Naive thymus-derived CD4-positive, alpha-beta T cell (primary cell): ENCODE measurements at regions of chr15 and their contacts with region 1.

Region 1: DNA sequence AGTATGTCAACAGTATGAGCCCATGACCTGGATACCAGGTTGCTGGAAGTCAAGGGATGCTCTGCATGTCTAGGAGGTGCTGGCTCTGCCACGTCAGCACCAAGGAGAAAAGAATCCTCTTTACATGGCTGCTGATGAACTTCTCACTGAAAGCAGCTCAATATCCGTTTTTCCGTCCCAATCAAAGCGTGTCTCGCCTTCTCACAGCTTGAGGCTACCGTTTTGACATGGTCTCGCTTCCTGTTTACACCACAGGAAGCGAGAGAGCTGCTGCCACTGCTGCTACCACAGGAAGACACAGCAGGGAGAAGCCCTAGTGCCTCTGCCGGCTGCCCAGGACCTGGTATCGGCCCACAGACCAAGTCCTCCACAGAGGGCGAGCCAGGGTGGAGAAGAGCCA is 27.3 kb downstream of the STARD5 start:
- DNase-seq: peak; percentile 38 to 87 (median 81)
- ATAC-seq: peak; percentile 69
- H3K4me3 ChIP-seq: peak overlapping the region; percentile 74
- H3K4me3 Mint-ChIP-seq: peak overlapping the region; percentile 80 to 100 (median 98)
- H3K27ac ChIP-seq: peak overlapping the region; percentile 87
- H3K27ac Mint-ChIP-seq: peak overlapping the region; percentile 93 to 100 (median 96)
- H3K4me1 ChIP-seq: peaks cover 52 to 59% of the 10 kb centered on the region in 2 donors
- H3K4me1 Mint-ChIP-seq: peaks cover 34 to 66% (median 64%) of the 10 kb centered on the region in 7 donors
- H3K27me3 ChIP-seq: no peaks in the 10 kb centered on the region
- H3K27me3 Mint-ChIP-seq: no peaks in the 10 kb centered on the region

Region 2: GRCh38 chr15:79970624-79971434 is 1325.8 kb before region 1 on chr15 and contains the start of gene BCL2A1:
- CTCF ChIA-PET with region 1: no interaction called
- POLR2A ChIA-PET with region 1: no interaction called
- intact Hi-C with region 1: loop called in 1 of 2 experiments (anchors 5 kb)
- DNase-seq: peak; percentile 30 to 85 (median 80)
- ATAC-seq: peak; percentile 91
- H3K4me3 ChIP-seq: peak within 1 kb of the TSS; percentile 81
- H3K4me3 Mint-ChIP-seq: peak within 1 kb of the TSS; percentile 88 to 98 (median 94)
- H3K27ac ChIP-seq: peak within 1 kb of the TSS; percentile 75
- H3K27ac Mint-ChIP-seq: peak within 1 kb of the TSS; percentile 93 to 99 (median 95)
- H3K4me1 ChIP-seq: peaks cover 27 to 39% of the 10 kb centered on the region in 2 donors
- H3K4me1 Mint-ChIP-seq: peaks cover 41 to 66% (median 58%) of the 10 kb centered on the region in 7 donors
- H3K27me3 ChIP-seq: no peaks in the 10 kb centered on the region
- H3K27me3 Mint-ChIP-seq: no peaks in the 10 kb centered on the region
- total RNA-seq, gene BCL2A1: 27.3 to 119 (median 31.0) TPM

Region 3: GRCh38 chr15:81073801-81074200 is 222.9 kb before region 1 on chr15:
- CTCF ChIA-PET with region 1: no interaction called
- POLR2A ChIA-PET with region 1: no interaction called
- intact Hi-C with region 1: no loop called
- DNase-seq: no peak
- ATAC-seq: no peak
- H3K4me3 ChIP-seq: no peak overlapping the region
- H3K4me3 Mint-ChIP-seq: no peak overlapping the region
- H3K27ac ChIP-seq: no peak overlapping the region
- H3K27ac Mint-ChIP-seq: no peak overlapping the region
- H3K4me1 ChIP-seq: no peaks in the 10 kb centered on the region
- H3K4me1 Mint-ChIP-seq: peaks cover 0 to 16% (median 0%) of the 10 kb centered on the region in 7 donors
- H3K27me3 ChIP-seq: no peaks in the 10 kb centered on the region
- H3K27me3 Mint-ChIP-seq: peaks cover 6 to 18% (median 10%) of the 10 kb centered on the region in 5 donors

Region 4: GRCh38 chr15:81286621-81287121 is 10.0 kb before region 1 on chr15:
- CTCF ChIA-PET with region 1: interaction called, 21 read pairs
- POLR2A ChIA-PET with region 1: interaction called, 642 read pairs
- intact Hi-C with region 1: loop called (anchors 1 kb)
- DNase-seq: peak in 7 of 9 donors; percentile 54 to 73 (median 68)
- ATAC-seq: peak; percentile 95
- H3K4me3 ChIP-seq: peak overlapping the region; percentile 49
- H3K4me3 Mint-ChIP-seq: peak overlapping the region; percentile 70 to 86 (median 80)
- H3K27ac ChIP-seq: peak overlapping the region; percentile 72
- H3K27ac Mint-ChIP-seq: peak overlapping the region; percentile 81 to 99 (median 96)
- H3K4me1 ChIP-seq: peaks cover 57 to 80% of the 10 kb centered on the region in 2 donors
- H3K4me1 Mint-ChIP-seq: peaks cover 52 to 98% (median 88%) of the 10 kb centered on the region in 7 donors
- H3K27me3 ChIP-seq: no peaks in the 10 kb centered on the region
- H3K27me3 Mint-ChIP-seq: no peaks in the 10 kb centered on the region

Region 5: GRCh38 chr15:81312790-81313543 is 16.3 kb after region 1 on chr15:
- CTCF ChIA-PET with region 1: interaction called, 28 read pairs
- POLR2A ChIA-PET with region 1: interaction called, 516 read pairs
- intact Hi-C with region 1: loop called in 1 of 2 experiments (anchors 2 kb)
- DNase-seq: no peak
- ATAC-seq: peak; percentile 41
- H3K4me3 ChIP-seq: no peak overlapping the region
- H3K4me3 Mint-ChIP-seq: peak overlapping the region in 7 of 10 donors; percentile 8 to 64 (median 46)
- H3K27ac ChIP-seq: peak overlapping the region; percentile 65
- H3K27ac Mint-ChIP-seq: peak overlapping the region in 8 of 9 donors; percentile 74 to 97 (median 90)
- H3K4me1 ChIP-seq: peaks cover 18 to 55% of the 10 kb centered on the region in 2 donors
- H3K4me1 Mint-ChIP-seq: peaks cover 53 to 97% (median 86%) of the 10 kb centered on the region in 7 donors
- H3K27me3 ChIP-seq: no peaks in the 10 kb centered on the region
- H3K27me3 Mint-ChIP-seq: no peaks in the 10 kb centered on the region

Region 6: DNA sequence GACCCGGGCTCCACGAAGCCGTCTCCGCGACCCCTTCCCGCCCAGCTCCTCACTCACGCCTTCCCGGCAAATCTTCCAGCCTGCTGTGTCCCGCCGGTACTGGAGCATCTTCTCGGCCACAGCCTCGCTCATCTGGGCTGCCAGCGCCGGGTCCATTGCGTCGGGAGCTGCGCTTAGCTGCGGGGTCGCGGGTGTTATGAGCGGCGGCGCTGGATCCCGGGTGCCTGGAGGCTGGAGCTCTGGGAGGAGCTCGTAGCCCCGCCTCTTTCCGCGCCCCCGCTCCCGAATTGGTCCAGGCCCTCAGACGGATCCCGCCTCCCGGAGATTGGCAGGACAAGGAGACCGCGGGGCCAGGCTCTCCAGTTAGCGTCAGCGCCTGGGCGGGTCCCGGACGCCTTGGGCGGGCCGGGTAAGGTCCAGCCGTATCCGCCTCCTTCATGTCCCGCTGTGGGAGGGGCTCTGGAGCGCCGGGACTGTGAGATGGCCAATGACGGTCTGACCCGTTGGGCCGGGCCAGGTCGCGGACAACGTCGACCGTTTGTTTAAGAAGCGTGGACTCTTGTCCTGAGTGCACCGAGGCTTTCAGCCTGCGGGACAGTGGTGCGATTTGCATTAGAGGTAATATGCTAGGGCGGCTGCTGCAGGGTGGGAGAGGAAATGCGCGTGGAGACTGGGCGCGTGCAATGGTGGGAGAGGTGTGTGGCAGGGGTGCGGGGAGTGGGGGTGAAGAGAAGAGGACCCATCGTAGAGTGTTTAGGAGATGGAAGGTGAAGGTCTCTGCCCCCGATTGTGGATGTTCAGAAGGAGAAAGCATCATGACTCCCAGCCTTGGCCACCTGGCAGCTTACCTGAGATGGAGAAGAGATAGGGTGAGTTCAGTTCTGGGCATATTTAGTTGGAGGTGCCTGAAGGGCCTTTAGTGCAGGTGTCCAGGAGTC is 27.5 kb after region 1 on chr15 and contains the start of gene STARD5:
- CTCF ChIA-PET with region 1: interaction called, 4 read pairs
- POLR2A ChIA-PET with region 1: interaction called, 480 read pairs
- intact Hi-C with region 1: loop called (anchors 1 to 2 kb)
- DNase-seq: peak; percentile 82 to 97 (median 92)
- ATAC-seq: peak; percentile 99
- H3K4me3 ChIP-seq: peak within 1 kb of the TSS; percentile 86
- H3K4me3 Mint-ChIP-seq: peak within 1 kb of the TSS; percentile 90 to 98 (median 94)
- H3K27ac ChIP-seq: peak within 1 kb of the TSS; percentile 78
- H3K27ac Mint-ChIP-seq: peak within 1 kb of the TSS; percentile 87 to 97 (median 92)
- H3K4me1 ChIP-seq: peaks cover 5 to 20% of the 10 kb centered on the region in 2 donors
- H3K4me1 Mint-ChIP-seq: peaks cover 31 to 65% (median 60%) of the 10 kb centered on the region in 7 donors
- H3K27me3 ChIP-seq: no peaks in the 10 kb centered on the region
- H3K27me3 Mint-ChIP-seq: no peaks in the 10 kb centered on the region
- total RNA-seq, gene STARD5: 5.0 to 11.7 (median 10.1) TPM

Region 7: DNA sequence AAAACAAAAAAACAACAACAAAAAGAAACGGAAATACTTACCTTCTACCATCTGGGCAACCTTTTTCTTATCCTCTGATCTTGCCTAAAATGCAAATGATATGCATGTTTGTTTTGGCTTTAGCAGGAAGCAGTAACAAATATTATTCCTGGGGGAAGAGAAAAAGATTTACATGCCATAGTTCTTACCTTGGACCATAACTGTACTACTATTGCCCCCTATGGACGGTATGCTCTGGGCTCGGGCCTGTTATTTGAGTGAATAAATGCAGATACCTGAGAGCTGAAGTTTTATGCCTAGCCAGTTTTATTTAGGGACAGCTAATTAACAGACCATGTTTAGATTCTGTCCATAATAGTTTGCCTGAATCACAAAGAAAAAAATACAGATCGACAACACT is 39.9 kb after region 1 on chr15:
- CTCF ChIA-PET with region 1: interaction called, 4 read pairs
- POLR2A ChIA-PET with region 1: interaction called, 480 read pairs
- intact Hi-C with region 1: loop called in 1 of 2 experiments (anchors 1 kb)
- DNase-seq: peak in 6 of 9 donors; percentile 32 to 49 (median 37)
- ATAC-seq: peak; percentile 70
- H3K4me3 ChIP-seq: no peak overlapping the region
- H3K4me3 Mint-ChIP-seq: no peak overlapping the region
- H3K27ac ChIP-seq: no peak overlapping the region
- H3K27ac Mint-ChIP-seq: peak overlapping the region in 4 of 9 donors; percentile 3 to 68 (median 17)
- H3K4me1 ChIP-seq: peaks cover 0 to 3% of the 10 kb centered on the region in 2 donors
- H3K4me1 Mint-ChIP-seq: peaks cover 4 to 22% (median 12%) of the 10 kb centered on the region in 7 donors
- H3K27me3 ChIP-seq: no peaks in the 10 kb centered on the region
- H3K27me3 Mint-ChIP-seq: peaks cover 0 to 9% (median 0%) of the 10 kb centered on the region in 5 donors